ENCODE measurements at regions of chr7 and their contacts with region 1.

Region 1: DNA sequence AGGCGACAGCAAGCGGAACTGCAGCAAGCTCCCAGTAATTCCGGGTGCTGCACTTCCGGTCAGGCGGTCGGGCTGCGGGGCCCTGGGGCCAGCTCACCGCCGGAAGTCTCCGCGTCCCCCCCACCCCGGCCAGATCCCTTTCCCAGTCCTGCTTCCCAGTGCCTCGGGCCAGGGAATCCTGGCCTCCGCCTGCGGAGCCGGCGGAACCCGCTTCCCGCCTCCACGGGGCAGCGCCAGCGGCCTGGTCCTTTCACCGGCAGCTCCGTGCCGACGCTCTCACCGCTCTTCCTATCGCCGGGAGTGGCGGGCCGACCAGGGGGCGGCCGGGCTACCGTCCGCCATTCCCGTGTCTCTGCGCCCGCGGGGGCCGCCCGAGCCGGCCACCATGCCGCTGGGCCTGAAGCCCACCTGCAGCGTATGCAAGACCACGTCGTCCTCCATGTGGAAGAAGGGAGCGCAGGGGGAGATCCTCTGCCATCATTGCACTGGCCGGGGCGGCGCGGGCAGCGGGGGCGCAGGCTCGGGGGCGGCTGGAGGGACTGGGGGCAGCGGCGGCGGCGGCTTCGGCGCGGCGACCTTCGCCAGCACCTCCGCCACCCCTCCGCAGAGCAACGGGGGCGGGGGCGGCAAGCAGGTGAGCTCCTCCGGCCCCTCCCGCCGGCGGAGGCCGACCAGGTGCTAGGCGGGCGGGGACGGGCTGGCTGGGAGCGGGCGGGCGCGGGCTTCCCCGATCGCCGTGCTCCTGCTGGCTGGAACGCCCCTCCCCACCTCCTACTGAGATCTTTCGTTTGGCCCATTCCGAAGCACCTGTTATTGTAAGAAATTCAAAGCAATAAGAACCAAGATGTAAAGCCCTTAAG is at the start of gene GATAD1:
- DNase-seq: peak; percentile 46
- H3K4me3 ChIP-seq: peak within 1 kb of the TSS; percentile 67
- H3K27me3 ChIP-seq: no peaks in the 10 kb centered on the region
- CTCF ChIP-seq: peak; percentile 90
- polyA plus RNA-seq, gene GATAD1: 17.4 and 27.0 TPM in 2 replicates

Region 2: DNA sequence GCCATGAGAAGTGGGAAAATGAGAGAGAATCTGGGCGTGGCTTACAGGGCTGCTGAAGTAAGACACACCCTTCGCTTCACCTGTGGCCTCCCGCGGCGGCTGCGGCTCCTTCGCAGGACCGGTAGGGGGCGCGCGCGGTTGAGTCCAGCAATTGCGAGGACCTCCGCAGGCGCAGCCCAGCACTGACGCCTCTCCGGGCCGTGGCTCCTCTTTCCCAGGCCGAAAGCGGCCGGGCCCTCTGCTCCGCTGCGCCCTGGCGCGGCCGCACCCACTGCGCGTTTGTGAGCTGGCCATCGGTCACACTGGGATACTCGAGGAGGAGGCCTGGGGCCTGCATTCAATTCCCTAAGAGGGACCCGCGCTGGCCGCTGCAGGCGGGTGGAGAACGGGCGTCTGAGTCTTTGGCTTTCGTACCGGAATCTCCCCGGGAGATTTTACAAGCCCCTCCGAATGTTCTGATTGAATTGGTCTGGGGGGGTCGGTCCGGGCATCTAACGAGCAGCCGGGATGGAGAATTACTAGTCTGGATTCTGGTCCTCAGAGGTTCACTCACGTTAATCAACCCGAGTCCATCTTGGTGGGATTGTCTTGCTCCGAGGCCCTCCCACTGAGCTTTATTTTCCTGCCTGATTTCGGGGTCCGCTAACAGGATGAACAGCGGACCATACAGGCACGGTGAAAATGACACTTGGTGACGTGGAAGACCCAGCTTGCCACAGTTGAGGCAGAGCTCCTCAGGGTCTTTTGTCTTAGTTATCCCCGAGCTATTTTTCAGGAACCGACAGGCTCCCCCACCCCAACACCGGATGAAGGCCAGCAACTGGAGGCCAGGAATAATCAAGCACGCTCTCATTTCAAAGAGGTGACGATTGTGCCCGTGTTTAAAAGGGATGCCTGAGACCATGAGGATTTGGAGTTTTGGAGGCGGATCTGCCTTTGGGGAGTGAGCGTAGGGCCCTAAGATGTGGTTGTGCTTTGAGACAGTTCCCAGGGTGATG is 268.3 kb before region 1 on chr7 and contains the start of gene LRRD1:
- CTCF ChIA-PET with region 1: interaction called, 11 read pairs
- POLR2A ChIA-PET with region 1: no interaction called
- DNase-seq: peak; percentile 25
- H3K4me3 ChIP-seq: peak within 1 kb of the TSS; percentile 37
- H3K27me3 ChIP-seq: no peaks in the 10 kb centered on the region
- CTCF ChIP-seq: peak; percentile 97
- polyA plus RNA-seq, gene LRRD1: 0.06 TPM in 1 of 2 replicates, not detected in the other

Region 3: GRCh38 chr7:92412745-92413144 is 34.8 kb before region 1 on chr7:
- CTCF ChIA-PET with region 1: interaction called, 20 read pairs
- POLR2A ChIA-PET with region 1: no interaction called
- DNase-seq: no peak
- H3K4me3 ChIP-seq: no peak overlapping the region
- H3K27me3 ChIP-seq: peaks cover 7% of the 10 kb centered on the region
- CTCF ChIP-seq: no peak

Region 4: GRCh38 chr7:92425321-92425947 is 22.1 kb before region 1 on chr7:
- CTCF ChIA-PET with region 1: interaction called, 36 read pairs
- POLR2A ChIA-PET with region 1: no interaction called
- DNase-seq: no peak
- H3K4me3 ChIP-seq: no peak overlapping the region
- H3K27me3 ChIP-seq: no peaks in the 10 kb centered on the region
- CTCF ChIP-seq: no peak